AG04449 (cell line): ENCODE measurements at regions of chr10 and their contacts with region 1.

Region 1: GRCh38 chr10:97334370-97335175 is at the start of gene FRAT2:
- DNase-seq: no peak
- H3K4me3 ChIP-seq: peak within 1 kb of the TSS; percentile 75
- CTCF ChIP-seq: no peak

Region 2: GRCh38 chr10:97318772-97319651 is 15.6 kb before region 1 on chr10 and contains the start of gene FRAT1:
- CTCF ChIA-PET with region 1: interaction called, 32 read pairs
- POLR2A ChIA-PET with region 1: interaction called, 8 read pairs
- DNase-seq: no peak
- H3K4me3 ChIP-seq: peak within 1 kb of the TSS; percentile 88
- CTCF ChIP-seq: no peak

Region 3: GRCh38 chr10:97367126-97367649 is 32.6 kb after region 1 on chr10:
- CTCF ChIA-PET with region 1: no interaction called
- POLR2A ChIA-PET with region 1: no interaction called
- DNase-seq: no peak
- H3K4me3 ChIP-seq: no peak overlapping the region
- CTCF ChIP-seq: no peak